ENCODE measurements at regions of chr22 and their contacts with region 1.

Region 1: DNA sequence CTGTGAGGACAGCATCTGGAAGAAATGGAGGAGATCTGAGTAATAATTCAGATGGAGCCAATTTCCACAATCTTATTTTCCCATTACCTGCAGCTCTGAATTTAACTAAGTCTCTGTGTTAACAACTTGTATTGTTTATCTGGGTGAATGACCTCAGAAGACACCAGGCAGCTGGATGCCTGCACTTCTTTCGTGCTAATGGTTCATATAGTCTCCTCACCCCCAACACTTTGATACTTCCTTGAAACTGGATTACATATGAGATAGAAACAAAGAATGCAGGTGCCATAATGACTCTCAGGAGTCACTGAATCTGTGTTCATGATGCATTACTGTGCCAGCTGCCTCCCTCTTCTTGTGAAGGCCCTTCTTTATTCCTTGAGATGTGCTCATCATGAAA is 125.6 kb upstream of the VPREB1 start:
- DNase-seq: no peak
- ATAC-seq: no peak
- H3K4me3 Mint-ChIP-seq: peak overlapping the region; percentile 50
- H3K27ac Mint-ChIP-seq: peak overlapping the region; percentile 94
- H3K4me1 Mint-ChIP-seq: peaks cover 29% of the 10 kb centered on the region
- H3K27me3 Mint-ChIP-seq: no peaks in the 10 kb centered on the region
- CTCF ChIP-seq: no peak

Region 2: GRCh38 chr22:22045571-22046335 is 73.2 kb before region 1 on chr22:
- CTCF ChIA-PET with region 1: no interaction called
- POLR2A ChIA-PET with region 1: no interaction called
- intact Hi-C with region 1: no loop called
- DNase-seq: no peak
- ATAC-seq: no peak
- H3K4me3 Mint-ChIP-seq: peak overlapping the region; percentile 67
- H3K27ac Mint-ChIP-seq: peak overlapping the region; percentile 80
- H3K4me1 Mint-ChIP-seq: peaks cover 52% of the 10 kb centered on the region
- H3K27me3 Mint-ChIP-seq: no peaks in the 10 kb centered on the region
- CTCF ChIP-seq: no peak

Region 3: DNA sequence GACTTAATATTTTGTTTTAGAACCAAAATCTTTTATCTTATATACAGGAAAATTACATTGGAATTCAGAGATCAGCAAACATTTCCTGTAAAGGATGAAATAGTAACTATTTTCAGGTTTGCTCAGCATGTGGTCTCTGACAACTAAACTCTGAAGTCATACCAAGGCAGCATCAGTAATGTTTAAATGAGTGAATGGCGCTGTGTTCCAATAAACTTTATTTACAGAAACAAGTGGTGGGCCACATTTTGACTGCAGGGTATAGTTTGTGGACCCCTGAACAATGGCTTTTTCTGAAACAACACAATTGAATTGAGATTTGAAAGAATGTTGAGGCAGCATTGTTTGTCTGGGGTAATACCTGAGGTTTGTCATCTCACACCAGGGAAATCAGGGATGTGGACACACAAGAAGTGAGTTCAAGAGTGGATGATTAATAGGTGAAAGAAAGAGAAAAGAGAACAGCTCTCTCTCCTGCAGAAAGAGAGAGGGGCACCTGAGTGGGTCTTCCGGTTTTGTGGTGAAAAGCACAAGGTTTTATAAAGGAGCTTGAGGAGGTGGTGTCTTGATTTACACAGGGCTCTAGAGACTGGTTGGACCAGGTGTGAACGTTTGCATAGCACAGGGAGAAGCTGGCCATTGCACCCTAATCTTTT is 12.1 kb after region 1 on chr22:
- CTCF ChIA-PET with region 1: interaction called, 4 read pairs
- POLR2A ChIA-PET with region 1: interaction called, 4 read pairs
- intact Hi-C with region 1: loop called (anchors 2 kb)
- DNase-seq: no peak
- ATAC-seq: no peak
- H3K4me3 Mint-ChIP-seq: no peak overlapping the region
- H3K27ac Mint-ChIP-seq: no peak overlapping the region
- H3K4me1 Mint-ChIP-seq: peaks cover 5% of the 10 kb centered on the region
- H3K27me3 Mint-ChIP-seq: no peaks in the 10 kb centered on the region
- CTCF ChIP-seq: no peak

Measured in activated B cell treated with CpG ODN at 0.5 μM for 24 hours (primary cell).